ENCODE measurements at regions of chr5 and their contacts with region 1.

Region 1: GRCh38 chr5:156254196-156254595 is 72.8 kb upstream of the SGCD start:
- DNase-seq: no peak
- ATAC-seq: no peak
- H3K4me3 ChIP-seq: no peak overlapping the region
- H3K27ac ChIP-seq: no peak overlapping the region
- H3K4me1 ChIP-seq: no peaks in the 10 kb centered on the region
- H3K27me3 ChIP-seq: no peaks in the 10 kb centered on the region
- CTCF ChIP-seq: no peak

Region 2: GRCh38 chr5:156186760-156187159 is 67.4 kb before region 1 on chr5:
- intact Hi-C with region 1: loop called in 1 of 2 experiments (anchors 1 kb)
- DNase-seq: no peak
- ATAC-seq: no peak
- H3K4me3 ChIP-seq: no peak overlapping the region
- H3K27ac ChIP-seq: no peak overlapping the region
- H3K4me1 ChIP-seq: no peaks in the 10 kb centered on the region
- H3K27me3 ChIP-seq: no peaks in the 10 kb centered on the region
- CTCF ChIP-seq: no peak

Region 3: GRCh38 chr5:156326718-156327259 is 72.6 kb after region 1 on chr5 and contains the start of gene SGCD:
- intact Hi-C with region 1: no loop called
- DNase-seq: peak; percentile 71 to 88
- ATAC-seq: peak; percentile 70 to 78 (median 74)
- H3K4me3 ChIP-seq: peak within 1 kb of the TSS; percentile 69
- H3K27ac ChIP-seq: peak within 1 kb of the TSS; percentile 86
- H3K4me1 ChIP-seq: peaks cover 37% of the 10 kb centered on the region
- H3K27me3 ChIP-seq: no peaks in the 10 kb centered on the region
- CTCF ChIP-seq: no peak
- total RNA-seq, gene SGCD: 28.4 to 51.5 (median 38.9) TPM

Measured in psoas muscle (tissue), 8 donors.